Activated T-helper 1 cell treated with anti-CD3 and anti-CD28 coated beads, Interleukin-12 subunit alpha, Interleukin-12 subunit beta, Interleukin-2, Interleukin-4 antibody, amounts not matched to agents 30 ng/mL and 10 ng/mL and 1 ng/mL, durations not matched to agents 14 hours and 24 hours and 36 hours (primary cell): ENCODE measurements at regions of chr14 and their contacts with region 1.

Region 1: DNA sequence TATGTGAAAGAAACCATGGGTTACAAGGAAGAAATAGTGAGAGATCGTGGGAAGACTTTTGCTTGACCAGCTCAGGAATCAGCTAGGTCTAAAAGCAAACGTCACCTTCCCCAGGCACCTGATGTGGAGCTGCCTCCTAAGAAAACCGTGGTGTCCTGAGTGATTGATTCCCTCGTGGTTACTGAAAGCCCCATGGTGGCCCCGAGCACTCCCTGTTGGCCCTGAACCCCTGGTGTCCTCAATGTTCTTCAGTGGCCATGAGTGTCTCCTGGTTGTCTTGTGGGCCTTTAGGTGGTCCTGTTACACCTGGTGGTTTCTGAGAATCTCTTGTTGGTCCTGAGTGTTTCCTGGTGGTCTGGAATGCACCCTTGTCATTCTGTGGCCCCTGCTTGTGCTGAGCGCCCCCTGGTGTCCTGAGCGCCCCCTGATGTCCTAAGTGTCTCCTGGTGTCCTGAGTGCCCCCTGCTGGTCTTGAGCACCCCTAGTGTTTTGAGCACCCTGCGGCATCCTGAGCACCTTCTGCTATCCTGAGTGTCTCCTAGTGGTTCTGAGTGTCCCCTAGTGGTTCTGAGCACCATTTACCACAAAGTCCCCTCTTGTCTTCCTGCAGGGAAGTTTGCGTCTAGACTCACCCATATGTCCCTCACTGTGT is 518.7 kb downstream of the TMEM121 start:
- DNase-seq: peak; percentile 69
- H3K4me3 Mint-ChIP-seq: no peak overlapping the region
- H3K27ac Mint-ChIP-seq: peak overlapping the region; percentile 20
- H3K4me1 Mint-ChIP-seq: peaks cover 12% of the 10 kb centered on the region
- H3K27me3 Mint-ChIP-seq: peaks cover 6% of the 10 kb centered on the region

Region 2: DNA sequence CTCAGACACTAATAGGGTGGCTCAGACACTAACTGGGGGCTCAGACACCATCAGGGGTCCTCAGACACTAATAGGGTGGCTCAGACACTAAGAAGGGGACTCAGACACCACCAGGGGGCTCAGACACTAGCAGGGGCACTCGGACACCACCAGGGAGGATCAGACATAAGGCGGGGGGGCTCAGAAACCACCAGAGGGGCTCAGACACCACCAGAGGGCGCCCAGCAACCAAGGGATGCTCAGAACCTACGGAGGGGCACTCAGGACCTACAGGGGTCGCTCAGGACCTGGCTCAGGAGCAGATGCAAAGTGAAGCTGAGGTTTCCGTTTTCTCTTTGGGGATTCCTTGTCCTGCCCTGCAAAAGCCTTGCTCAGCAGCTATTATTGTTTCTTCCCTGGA is 70.2 kb before region 1 on chr14:
- intact Hi-C with region 1: loop called (anchors 2 kb)
- DNase-seq: peak; percentile 31
- H3K4me3 Mint-ChIP-seq: no peak overlapping the region
- H3K27ac Mint-ChIP-seq: no peak overlapping the region
- H3K4me1 Mint-ChIP-seq: no peaks in the 10 kb centered on the region
- H3K27me3 Mint-ChIP-seq: peaks cover 9% of the 10 kb centered on the region

Region 3: DNA sequence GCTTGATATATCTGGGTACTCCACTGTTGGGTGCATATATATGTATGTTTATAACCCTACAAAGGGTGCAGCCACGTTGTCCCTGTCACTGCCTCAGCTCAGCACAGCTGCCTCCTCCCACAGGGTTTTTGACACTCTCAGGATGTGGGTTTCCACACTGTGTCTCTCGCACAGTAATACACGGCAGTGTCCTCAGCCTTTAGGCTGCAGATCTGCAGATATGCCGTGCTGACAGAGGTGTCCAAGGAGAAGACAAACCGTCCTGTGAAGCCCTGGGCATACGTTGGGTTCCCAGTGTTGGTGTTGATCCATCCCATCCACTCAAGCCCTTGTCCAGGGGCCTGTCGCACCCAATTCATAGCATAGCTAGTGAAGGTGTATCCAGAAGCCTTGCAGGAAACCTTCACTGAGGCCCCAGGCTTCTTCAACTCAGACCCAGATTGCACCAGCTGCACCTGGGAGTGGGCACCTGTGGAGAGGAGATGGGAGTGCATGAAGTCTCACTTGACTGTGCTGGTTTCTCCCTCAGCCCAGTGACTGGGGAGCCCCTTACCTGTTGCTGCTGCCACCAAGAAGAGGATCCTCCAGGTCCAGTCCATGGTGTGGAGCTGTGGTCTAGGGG is 20.0 kb before region 1 on chr14:
- intact Hi-C with region 1: loop called (anchors 2 kb)
- DNase-seq: peak; percentile 57
- H3K4me3 Mint-ChIP-seq: peak overlapping the region; percentile 27
- H3K27ac Mint-ChIP-seq: peak overlapping the region; percentile 81
- H3K4me1 Mint-ChIP-seq: peaks cover 60% of the 10 kb centered on the region
- H3K27me3 Mint-ChIP-seq: peaks cover 1% of the 10 kb centered on the region

Region 4: DNA sequence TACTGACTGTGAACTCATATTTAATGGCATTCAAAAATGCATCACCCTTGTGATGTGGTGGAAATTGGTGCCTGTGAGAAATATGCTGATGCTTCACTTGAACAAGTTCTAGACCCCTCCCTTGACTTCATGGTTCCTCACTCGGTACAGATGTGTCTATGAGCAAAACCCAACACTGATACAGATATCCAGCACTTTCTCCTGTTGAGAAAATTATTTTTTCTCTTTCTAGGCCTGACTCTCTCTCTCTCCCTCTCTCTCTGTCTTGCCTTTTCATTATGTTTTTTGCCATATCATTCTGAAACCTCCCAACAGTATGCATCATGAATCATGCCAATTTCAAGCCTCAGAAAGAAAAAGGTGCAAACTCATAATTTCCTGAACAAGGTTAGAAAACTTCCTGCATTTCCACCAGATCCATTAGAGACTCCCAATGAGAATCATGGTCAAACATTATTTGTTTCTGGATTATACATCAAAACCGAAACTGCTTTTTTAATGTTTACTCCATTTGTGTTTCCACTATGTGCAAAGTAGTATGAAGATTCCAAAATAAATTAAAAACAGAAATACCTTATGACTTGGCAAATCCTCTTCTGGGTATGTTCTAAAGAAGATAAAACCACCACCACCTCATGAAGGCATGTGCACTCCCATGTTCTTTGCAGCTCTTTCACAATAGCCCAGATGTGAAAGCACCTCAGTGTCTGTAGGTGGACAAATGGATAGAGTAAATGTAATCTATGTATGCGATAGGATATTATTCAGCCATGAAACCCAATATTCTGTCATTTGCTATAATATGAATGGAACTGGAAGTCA is 24.9 kb after region 1 on chr14:
- intact Hi-C with region 1: loop called (anchors 2 kb)
- DNase-seq: no peak
- H3K4me3 Mint-ChIP-seq: no peak overlapping the region
- H3K27ac Mint-ChIP-seq: peak overlapping the region; percentile 54
- H3K4me1 Mint-ChIP-seq: peaks cover 24% of the 10 kb centered on the region
- H3K27me3 Mint-ChIP-seq: peaks cover 14% of the 10 kb centered on the region

Region 5: GRCh38 chr14:106094654-106095189 is 49.6 kb after region 1 on chr14:
- intact Hi-C with region 1: loop called (anchors 2 kb)
- DNase-seq: peak; percentile 79
- H3K4me3 Mint-ChIP-seq: no peak overlapping the region
- H3K27ac Mint-ChIP-seq: no peak overlapping the region
- H3K4me1 Mint-ChIP-seq: peaks cover 7% of the 10 kb centered on the region
- H3K27me3 Mint-ChIP-seq: peaks cover 27% of the 10 kb centered on the region